ENCODE measurements at regions of chr17 and their contacts with region 1.

Region 1: DNA sequence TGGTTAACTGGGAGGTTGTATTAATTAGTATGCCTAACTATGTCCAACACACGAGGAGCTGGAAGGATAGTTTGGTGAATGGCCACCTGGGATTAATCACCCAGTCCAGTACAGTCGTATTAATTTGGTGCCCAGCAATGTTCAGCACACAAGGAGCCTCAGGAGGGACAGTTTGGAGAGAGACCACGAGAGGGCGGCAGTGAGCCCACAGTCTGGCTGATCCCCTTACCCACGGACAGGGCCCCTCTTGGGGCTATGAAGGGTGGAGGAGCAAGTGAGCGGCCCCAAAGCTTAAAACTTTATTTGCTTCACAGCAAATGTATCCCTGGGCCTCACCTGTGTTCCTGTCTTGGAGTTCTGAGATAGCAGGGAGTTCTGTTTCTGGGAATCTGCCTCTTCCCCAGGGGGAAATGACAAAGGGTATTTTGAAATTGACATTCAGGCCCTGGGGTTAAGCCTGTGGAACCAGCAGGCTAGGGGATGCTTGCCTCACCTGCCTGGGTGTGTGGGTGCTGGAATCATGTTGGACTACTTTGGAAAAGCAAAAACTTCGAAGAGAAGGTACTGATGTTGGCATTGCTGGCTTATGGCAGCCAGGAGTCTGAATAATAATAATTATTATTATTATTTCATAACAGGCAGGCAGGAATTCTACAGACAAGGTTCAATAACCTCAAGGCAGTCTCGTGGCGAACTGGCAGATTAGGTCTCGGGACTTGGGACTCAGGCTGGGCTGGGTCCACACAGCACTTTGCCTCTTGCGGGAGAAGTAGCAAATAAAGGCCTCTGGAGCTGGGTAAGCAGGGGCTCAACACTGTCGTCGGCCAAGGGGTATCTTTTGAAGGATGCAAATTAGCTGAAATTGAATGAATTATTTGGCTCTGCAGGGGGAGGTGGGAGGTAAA is 227.6 kb upstream of the ASIC2 start:
- DNase-seq: peak; percentile 10
- ATAC-seq: peak; percentile 82
- H3K4me3 ChIP-seq: no peak overlapping the region
- H3K27ac ChIP-seq: no peak overlapping the region
- H3K4me1 ChIP-seq: no peaks in the 10 kb centered on the region
- H3K27me3 ChIP-seq: no peaks in the 10 kb centered on the region
- CTCF ChIP-seq: peak; percentile 91

Region 2: DNA sequence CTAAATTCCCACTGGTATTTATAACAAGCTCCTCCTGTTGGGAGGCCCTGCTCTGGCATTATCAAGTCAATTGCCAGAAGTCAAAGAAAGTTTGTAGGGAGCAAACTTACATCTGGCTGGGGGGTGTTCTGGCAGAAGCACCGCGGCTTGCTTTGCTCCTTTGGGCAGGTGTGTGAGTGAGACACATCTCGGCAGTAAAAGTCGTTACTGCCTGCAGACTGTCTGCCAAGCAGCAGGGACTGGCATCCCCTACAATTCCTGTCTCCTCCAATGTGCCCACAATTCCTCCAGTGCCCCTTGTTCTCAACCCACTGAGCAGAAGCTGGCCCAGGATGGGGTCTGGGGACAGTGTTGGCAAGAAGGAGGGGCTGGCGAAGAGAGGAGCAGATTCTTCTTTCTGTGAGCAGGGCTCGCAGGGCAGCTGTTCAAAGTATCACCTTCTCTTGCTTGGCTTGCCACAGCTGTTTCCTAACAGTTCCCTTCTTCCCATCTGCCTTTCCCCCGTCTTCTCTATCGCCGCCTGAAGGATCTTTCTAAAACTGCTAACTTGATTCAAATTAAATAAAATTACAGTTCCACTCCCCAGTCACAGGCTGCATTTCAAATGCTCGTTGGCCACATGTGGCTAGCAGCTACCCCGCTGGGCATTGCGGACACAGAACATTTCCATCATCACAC is 498.8 kb before region 1 on chr17:
- CTCF ChIA-PET with region 1: no interaction called
- POLR2A ChIA-PET with region 1: no interaction called
- in situ Hi-C with region 1: no loop called
- intact Hi-C with region 1: loop called (anchors 10 kb)
- DNase-seq: no peak
- ATAC-seq: no peak
- H3K4me3 ChIP-seq: no peak overlapping the region
- H3K27ac ChIP-seq: no peak overlapping the region
- H3K4me1 ChIP-seq: no peaks in the 10 kb centered on the region
- H3K27me3 ChIP-seq: no peaks in the 10 kb centered on the region
- CTCF ChIP-seq: no peak

Region 3: GRCh38 chr17:33292184-33292980 is 228.3 kb before region 1 on chr17:
- CTCF ChIA-PET with region 1: interaction called, 5 read pairs
- POLR2A ChIA-PET with region 1: no interaction called
- in situ Hi-C with region 1: no loop called
- intact Hi-C with region 1: loop called (anchors 10 kb)
- DNase-seq: no peak
- ATAC-seq: peak; percentile 78
- H3K4me3 ChIP-seq: peak overlapping the region; percentile 58 to 74
- H3K27ac ChIP-seq: peak overlapping the region; percentile 41; the same call in 1 of the 2 replicates
- H3K4me1 ChIP-seq: peaks cover 31% of the 10 kb centered on the region
- H3K27me3 ChIP-seq: no peaks in the 10 kb centered on the region
- CTCF ChIP-seq: peak; percentile 69

Region 4: DNA sequence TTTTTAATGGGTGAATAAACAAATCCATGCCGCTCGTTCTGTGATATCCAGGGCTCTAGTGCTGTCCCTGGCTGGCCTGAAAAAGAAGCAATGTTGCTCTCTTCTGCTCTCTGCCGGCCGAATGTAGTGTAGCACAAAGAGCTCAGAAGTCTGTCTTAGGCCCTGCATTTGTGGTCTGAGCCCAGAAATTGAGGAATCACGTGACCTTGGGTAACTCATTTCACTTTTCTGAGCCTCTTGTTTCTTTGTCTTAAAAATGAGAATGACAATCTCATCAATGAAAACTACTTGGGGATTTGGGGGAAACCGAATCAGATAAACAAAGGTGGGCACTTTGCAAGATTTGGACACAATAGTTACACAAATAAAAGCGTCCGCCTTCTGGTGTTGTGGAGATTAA is 154.0 kb after region 1 on chr17:
- CTCF ChIA-PET with region 1: interaction called, 6 read pairs
- POLR2A ChIA-PET with region 1: no interaction called
- in situ Hi-C with region 1: no loop called
- intact Hi-C with region 1: loop called (anchors 5 kb)
- DNase-seq: peak; percentile 47
- ATAC-seq: peak; percentile 98
- H3K4me3 ChIP-seq: no peak overlapping the region
- H3K27ac ChIP-seq: no peak overlapping the region
- H3K4me1 ChIP-seq: no peaks in the 10 kb centered on the region
- H3K27me3 ChIP-seq: 0 out of 2 replicates have a peak, but pooled peaks cover 2% of the 10 kb centered on the region
- CTCF ChIP-seq: peak; percentile 89

Region 5: GRCh38 chr17:33750943-33751701 is 230.4 kb after region 1 on chr17:
- CTCF ChIA-PET with region 1: no interaction called
- POLR2A ChIA-PET with region 1: no interaction called
- in situ Hi-C with region 1: no loop called
- intact Hi-C with region 1: loop called (anchors 5 kb)
- DNase-seq: peak; percentile 39
- ATAC-seq: peak; percentile 91
- H3K4me3 ChIP-seq: 0 out of 4 replicates have a peak overlapping the region, but pooled peaks of 1 of the 2 experiments have one; percentile 6
- H3K27ac ChIP-seq: no peak overlapping the region
- H3K4me1 ChIP-seq: peaks cover 4% of the 10 kb centered on the region
- H3K27me3 ChIP-seq: peaks cover 8% of the 10 kb centered on the region
- CTCF ChIP-seq: peak; percentile 93

Region 6: GRCh38 chr17:34012709-34013375 is 492.2 kb after region 1 on chr17:
- CTCF ChIA-PET with region 1: no interaction called
- POLR2A ChIA-PET with region 1: no interaction called
- in situ Hi-C with region 1: no loop called
- intact Hi-C with region 1: no loop called
- DNase-seq: no peak
- ATAC-seq: no peak
- H3K4me3 ChIP-seq: no peak overlapping the region
- H3K27ac ChIP-seq: no peak overlapping the region
- H3K4me1 ChIP-seq: no peaks in the 10 kb centered on the region
- H3K27me3 ChIP-seq: no peaks in the 10 kb centered on the region
- CTCF ChIP-seq: no peak